Activated CD8-positive, alpha-beta T cell treated with anti-CD3 and anti-CD28 coated beads, Interleukin-2, amount 10 ng/mL, durations not matched to agents 7 days and 5 days (primary cell): ENCODE measurements at regions of chr2 and their contacts with region 1.

Region 1: GRCh38 chr2:172972005-172972619 is 103.5 kb upstream of the MAP3K20 start:
- DNase-seq: peak; percentile 62
- ATAC-seq: peak; percentile 61
- H3K4me3 Mint-ChIP-seq: no peak overlapping the region
- H3K27ac Mint-ChIP-seq: no peak overlapping the region
- H3K4me1 Mint-ChIP-seq: peaks cover 11% of the 10 kb centered on the region
- H3K27me3 Mint-ChIP-seq: peaks cover 14% of the 10 kb centered on the region

Region 2: DNA sequence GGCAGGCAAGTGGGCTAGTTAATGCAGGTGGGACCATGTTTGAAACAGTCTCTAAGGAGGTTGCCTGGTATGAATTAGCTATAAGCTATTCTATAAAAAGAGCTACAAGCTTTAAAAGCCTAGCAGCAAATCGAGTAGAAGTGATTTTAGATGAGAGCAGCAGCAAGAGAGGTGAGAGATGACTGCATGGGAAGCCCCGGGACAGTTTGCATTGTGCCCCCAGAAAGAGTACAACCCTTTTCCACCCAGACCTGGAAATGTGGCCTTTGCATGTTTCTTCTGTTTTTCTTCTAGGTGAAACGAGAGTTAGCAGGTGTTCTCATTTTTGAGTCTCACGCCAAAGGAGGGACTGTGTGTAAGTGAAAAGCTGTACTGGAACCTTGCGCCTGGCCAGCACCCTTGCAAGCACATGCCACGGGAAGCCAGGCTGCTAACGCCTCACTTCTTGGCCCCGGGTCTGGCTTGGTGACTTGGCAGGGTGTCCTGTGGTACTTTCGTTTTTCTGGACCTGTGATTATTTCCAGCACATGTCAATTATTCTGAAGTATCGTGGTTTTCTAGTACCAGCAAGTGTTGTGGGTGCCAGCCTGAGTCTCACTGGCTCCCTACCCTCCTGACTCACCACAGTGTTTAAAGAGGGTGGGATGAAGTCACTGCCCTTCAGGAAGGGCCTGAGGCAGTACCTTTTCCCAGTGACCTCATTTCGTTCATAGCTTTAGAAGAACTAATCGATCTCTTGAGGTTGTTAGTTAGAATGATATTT is 13.2 kb after region 1 on chr2:
- CTCF ChIA-PET with region 1: interaction called, 13 read pairs
- POLR2A ChIA-PET with region 1: no interaction called
- DNase-seq: no peak
- ATAC-seq: no peak
- H3K4me3 Mint-ChIP-seq: no peak overlapping the region
- H3K27ac Mint-ChIP-seq: no peak overlapping the region
- H3K4me1 Mint-ChIP-seq: peaks cover 5% of the 10 kb centered on the region
- H3K27me3 Mint-ChIP-seq: peaks cover 3% of the 10 kb centered on the region

Region 3: GRCh38 chr2:173584673-173585458 is 612.8 kb after region 1 on chr2:
- CTCF ChIA-PET with region 1: no interaction called
- POLR2A ChIA-PET with region 1: no interaction called
- DNase-seq: no peak
- ATAC-seq: no peak
- H3K4me3 Mint-ChIP-seq: no peak overlapping the region
- H3K27ac Mint-ChIP-seq: no peak overlapping the region
- H3K4me1 Mint-ChIP-seq: no peaks in the 10 kb centered on the region
- H3K27me3 Mint-ChIP-seq: peaks cover 19% of the 10 kb centered on the region

Region 4: DNA sequence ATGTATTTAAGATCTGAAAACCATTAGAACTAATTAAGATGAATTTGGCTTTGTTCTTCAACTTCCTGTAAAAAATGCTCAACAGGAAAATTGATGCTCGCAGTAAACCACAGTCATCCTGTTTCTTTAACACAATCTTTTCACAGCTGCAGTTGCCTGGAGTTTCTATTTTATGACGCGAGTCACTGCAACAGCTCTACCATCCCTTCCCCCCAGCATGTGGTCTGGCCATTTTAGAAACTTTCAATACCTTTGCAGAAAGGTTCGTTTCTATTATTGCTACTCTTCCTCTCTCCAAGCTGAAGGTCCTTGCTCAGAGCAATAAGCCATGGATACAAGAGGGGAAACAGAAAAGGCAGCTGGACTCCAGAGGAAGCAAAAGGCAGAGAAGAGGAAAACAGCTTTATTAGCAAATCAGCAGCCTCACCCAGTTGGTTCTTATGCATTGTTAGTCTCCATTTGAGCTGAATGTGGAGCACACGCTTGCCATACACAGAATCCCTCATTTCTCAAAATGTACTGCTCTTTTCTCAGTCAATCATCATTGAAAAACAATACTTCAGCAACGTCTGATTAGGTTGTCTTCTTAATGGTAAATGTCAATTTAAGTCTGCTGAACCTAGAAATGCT is 1621.6 kb after region 1 on chr2:
- CTCF ChIA-PET with region 1: no interaction called
- POLR2A ChIA-PET with region 1: interaction called, 10 read pairs
- DNase-seq: peak; percentile 89
- ATAC-seq: peak; percentile 73
- H3K4me3 Mint-ChIP-seq: peak overlapping the region; percentile 80
- H3K27ac Mint-ChIP-seq: peak overlapping the region; percentile 97
- H3K4me1 Mint-ChIP-seq: peaks cover 47% of the 10 kb centered on the region
- H3K27me3 Mint-ChIP-seq: no peaks in the 10 kb centered on the region